ENCODE measurements at regions of chr12 and their contacts with region 1.

Region 1: GRCh38 chr12:51951199-51951842 is at the start of gene ACVR1B:
- DNase-seq: peak; percentile 90
- ATAC-seq: peak; percentile 98
- H3K4me3 ChIP-seq: peak within 1 kb of the TSS; percentile 55
- H3K27ac ChIP-seq: peak within 1 kb of the TSS; percentile 67
- H3K4me1 ChIP-seq: peaks cover 8% of the 10 kb centered on the region
- H3K27me3 ChIP-seq: peaks cover 23% of the 10 kb centered on the region
- CTCF ChIP-seq: no peak
- POLR2A ChIP-seq: no peak; the same call in 1 of the 2 replicates
- RAD21 ChIP-seq: no peak
- total RNA-seq, gene ACVR1B: 5.7 and 5.8 TPM in 2 replicates

Region 2: DNA sequence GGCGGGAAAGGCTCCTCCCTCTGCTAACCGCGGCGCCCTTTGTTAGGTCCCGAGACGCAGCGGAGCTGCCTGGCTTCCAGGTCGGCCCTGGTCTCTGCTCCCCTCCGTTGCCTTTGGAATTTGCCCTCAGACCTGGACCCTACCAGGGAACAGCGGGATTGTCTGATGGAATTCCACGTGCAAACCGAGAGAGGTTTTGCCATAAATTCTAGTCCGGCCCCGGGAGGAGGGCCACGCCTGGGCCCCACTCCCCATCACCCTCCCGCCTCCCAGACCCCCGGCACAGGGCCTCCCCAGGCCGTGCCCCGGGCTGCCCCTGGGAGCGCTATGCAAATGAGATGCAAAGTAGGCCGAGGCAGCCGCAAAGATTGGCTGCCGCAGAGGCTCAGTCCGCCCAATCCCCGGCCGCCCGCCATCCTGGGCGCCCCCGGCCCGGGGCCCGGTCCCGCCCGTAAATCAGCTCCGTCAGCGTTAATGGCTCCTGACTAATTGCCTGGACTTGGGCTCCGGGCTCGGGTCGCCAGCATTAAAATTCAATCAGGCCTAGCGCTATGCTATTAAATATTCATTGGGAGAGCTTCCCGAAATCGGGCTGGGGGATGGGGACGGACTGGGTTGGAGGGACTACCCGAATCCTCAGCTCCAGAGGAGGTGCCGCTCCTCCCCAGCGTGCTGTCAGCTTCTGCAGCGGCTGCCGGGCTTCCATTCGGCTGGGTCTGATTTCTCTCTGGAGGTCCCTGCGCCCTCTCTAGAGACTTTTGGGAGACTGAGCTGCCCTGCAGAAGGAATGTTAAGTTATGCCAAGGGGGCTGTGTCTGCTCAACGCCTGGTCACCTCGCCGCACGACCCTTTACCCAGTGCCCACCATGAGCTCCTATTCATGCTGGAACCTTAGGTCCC is 87.1 kb before region 1 on chr12:
- CTCF ChIA-PET with region 1: no interaction called
- POLR2A ChIA-PET with region 1: no interaction called
- dilution Hi-C with region 1: loop called (anchors 25 kb)
- in situ Hi-C with region 1: no loop called
- intact Hi-C with region 1: no loop called
- DNase-seq: no peak
- ATAC-seq: peak; percentile 55
- H3K4me3 ChIP-seq: no peak overlapping the region
- H3K27ac ChIP-seq: no peak overlapping the region
- H3K4me1 ChIP-seq: peaks cover 2% of the 10 kb centered on the region
- H3K27me3 ChIP-seq: peaks cover 48% of the 10 kb centered on the region
- CTCF ChIP-seq: no peak
- POLR2A ChIP-seq: no peak
- RAD21 ChIP-seq: no peak

Region 3: GRCh38 chr12:51886021-51886322 is 65.3 kb before region 1 on chr12:
- CTCF ChIA-PET with region 1: no interaction called
- POLR2A ChIA-PET with region 1: no interaction called
- dilution Hi-C with region 1: no loop called
- in situ Hi-C with region 1: no loop called
- intact Hi-C with region 1: no loop called
- DNase-seq: peak; percentile 99
- ATAC-seq: peak; percentile 93
- H3K4me3 ChIP-seq: no peak overlapping the region
- H3K27ac ChIP-seq: peak overlapping the region; percentile 1; the same call in 1 of the 2 replicates
- H3K4me1 ChIP-seq: peaks cover 6% of the 10 kb centered on the region
- H3K27me3 ChIP-seq: no peaks in the 10 kb centered on the region
- CTCF ChIP-seq: no peak
- POLR2A ChIP-seq: no peak
- RAD21 ChIP-seq: no peak

Region 4: GRCh38 chr12:51905471-51906429 is 45.6 kb before region 1 on chr12:
- CTCF ChIA-PET with region 1: no interaction called
- POLR2A ChIA-PET with region 1: no interaction called
- dilution Hi-C with region 1: no loop called
- in situ Hi-C with region 1: no loop called
- intact Hi-C with region 1: no loop called
- DNase-seq: peak; percentile 40
- ATAC-seq: no peak; the same call in 1 of the 2 replicates
- H3K4me3 ChIP-seq: no peak overlapping the region
- H3K27ac ChIP-seq: peak overlapping the region; percentile 85
- H3K4me1 ChIP-seq: peaks cover 27% of the 10 kb centered on the region
- H3K27me3 ChIP-seq: no peaks in the 10 kb centered on the region
- CTCF ChIP-seq: no peak
- POLR2A ChIP-seq: no peak
- RAD21 ChIP-seq: no peak

Region 5: GRCh38 chr12:52260361-52261205 is 309.3 kb after region 1 on chr12:
- CTCF ChIA-PET with region 1: no interaction called
- POLR2A ChIA-PET with region 1: no interaction called
- dilution Hi-C with region 1: no loop called
- in situ Hi-C with region 1: no loop called
- intact Hi-C with region 1: no loop called
- DNase-seq: peak; percentile 80
- ATAC-seq: peak; percentile 30; the same call in 1 of the 2 replicates
- H3K4me3 ChIP-seq: no peak overlapping the region
- H3K27ac ChIP-seq: no peak overlapping the region
- H3K4me1 ChIP-seq: peaks cover 14% of the 10 kb centered on the region
- H3K27me3 ChIP-seq: peaks cover 33% of the 10 kb centered on the region
- CTCF ChIP-seq: no peak
- POLR2A ChIP-seq: no peak
- RAD21 ChIP-seq: no peak